ENCODE measurements at regions of chr1 and their contacts with region 1.

Region 1: DNA sequence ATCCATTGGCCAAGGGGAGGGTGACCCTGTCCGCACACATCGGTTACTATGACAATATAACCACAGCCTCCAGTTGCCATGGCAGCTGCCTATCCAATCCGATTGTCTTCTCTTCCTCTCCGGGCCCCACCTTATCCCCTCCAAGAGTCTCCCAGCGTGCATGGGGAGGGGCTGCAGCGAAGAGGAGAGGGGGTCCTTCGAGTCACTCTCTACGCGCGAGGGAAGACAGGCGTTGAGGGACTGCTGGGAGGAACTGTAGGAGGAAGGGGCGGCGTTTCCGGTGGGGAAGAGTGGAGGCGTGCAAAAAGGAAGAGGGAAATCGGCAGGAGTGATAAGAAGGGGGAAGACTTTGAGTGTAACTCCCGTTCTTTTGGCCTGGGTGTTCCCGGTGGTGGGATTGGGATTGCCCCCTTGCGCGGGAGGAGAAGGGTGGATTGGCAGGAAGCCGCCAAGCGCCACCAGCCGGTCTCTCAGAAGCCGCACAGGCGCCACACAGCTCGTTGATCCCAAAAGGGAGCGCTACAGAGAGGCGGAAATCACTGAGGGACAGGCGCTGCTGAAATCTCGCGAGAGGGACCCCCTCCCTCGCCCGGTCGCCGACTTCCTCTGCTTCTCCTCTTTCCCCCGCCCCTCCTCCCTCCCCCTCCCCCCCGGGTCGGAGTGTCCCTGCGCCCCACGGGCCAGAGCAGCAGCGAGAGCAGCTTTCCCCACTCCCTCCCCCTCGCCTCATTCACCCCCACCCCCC is 384 bp upstream of the SMG7 start:
- DNase-seq: peak; percentile 90
- H3K4me3 ChIP-seq: peak overlapping the region; percentile 92 to 100 (median 92)
- H3K27ac ChIP-seq: peak overlapping the region; percentile 93 to 99 (median 98)
- H3K4me1 ChIP-seq: peaks cover 0 to 59% (median 25%) of the 10 kb centered on the region in 3 donors
- H3K27me3 ChIP-seq: no peaks in the 10 kb centered on the region
- CTCF ChIP-seq: peak in 2 of 6 experiments; percentile 8 to 15
- POLR2A ChIP-seq: peak in 1 of 4 donors; percentile 5

Region 2: DNA sequence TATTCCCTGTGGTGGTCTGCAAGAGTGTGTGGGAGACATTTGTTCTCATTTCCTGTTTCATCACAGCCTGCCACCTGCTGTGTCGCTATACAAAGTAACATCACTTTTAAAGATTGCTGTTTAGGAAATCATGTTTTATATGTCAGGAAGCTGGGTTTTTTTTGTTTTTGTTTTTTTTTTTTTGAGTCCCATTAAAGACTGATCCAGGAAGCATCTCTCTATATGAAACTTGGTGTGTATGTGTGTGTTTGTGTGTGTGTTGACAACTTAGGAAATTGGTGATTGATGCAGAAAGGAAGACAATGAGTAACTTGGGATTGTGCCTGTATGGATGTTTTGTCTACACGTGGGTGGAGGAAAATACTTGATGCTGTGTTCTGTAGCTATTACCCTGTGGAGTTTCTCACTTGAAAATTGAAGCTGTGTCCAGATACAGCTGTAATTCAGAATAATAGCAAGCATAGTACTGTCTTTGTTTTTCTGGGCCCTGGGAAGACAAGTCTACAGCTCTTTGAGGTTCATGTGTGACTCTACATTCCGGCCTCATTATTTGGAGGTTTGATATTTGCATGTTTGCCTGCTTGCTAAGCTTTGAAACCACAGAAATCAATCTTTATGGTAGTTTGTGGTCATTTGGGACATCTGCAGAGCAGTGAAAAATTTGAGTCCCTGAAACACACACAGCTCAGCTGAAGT is 400.8 kb before region 1 on chr1:
- intact Hi-C with region 1: no loop called
- DNase-seq: no peak
- H3K4me3 ChIP-seq: no peak overlapping the region
- H3K27ac ChIP-seq: no peak overlapping the region
- H3K4me1 ChIP-seq: peaks cover 7 to 70% (median 30%) of the 10 kb centered on the region in 3 donors
- H3K27me3 ChIP-seq: no peaks in the 10 kb centered on the region
- CTCF ChIP-seq: no peak
- POLR2A ChIP-seq: no peak

Region 3: DNA sequence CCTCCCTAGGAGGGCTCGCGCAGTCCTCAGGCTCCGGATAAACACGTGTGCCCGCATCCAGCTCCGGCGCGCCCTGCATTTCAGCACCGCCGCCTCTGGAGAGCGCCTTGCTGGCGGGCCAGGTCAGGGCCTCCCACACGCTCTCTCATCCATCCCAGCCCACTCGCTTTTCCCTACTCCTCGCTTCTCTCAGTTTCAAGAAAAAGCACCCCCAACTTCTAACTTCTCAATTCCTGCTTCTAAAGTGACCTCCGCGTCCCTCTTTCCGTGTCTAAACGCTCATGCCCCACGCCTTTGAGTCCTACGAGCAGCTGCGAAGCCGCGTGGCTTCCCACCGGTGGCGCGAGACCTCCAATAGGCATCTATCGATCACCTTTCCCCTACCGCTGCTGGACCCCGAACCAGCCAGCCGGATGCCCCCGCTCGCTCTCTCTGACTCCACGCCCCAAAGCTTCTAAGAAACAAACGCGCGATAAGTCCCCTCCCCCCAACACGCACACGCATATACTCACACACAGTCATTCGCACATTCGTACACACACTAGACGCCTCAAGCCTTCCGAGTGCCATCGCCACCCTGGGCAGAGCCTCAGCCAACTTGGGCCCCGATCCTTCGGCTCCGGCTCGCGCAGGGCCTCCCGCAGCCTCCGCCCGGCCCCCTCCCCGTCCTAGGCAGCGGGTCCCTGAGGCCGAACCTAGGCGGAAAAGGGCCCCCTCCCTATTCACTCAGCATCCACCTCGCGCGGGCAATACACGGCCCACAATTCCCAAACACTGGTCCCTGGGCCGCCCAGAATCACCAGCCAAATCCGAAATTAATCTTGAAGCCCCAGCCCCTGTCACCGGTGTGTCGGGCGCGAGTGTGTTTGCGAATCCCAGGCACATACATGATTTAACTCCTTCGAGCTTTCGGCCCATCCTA is 54.8 kb before region 1 on chr1:
- intact Hi-C with region 1: no loop called
- DNase-seq: no peak
- H3K4me3 ChIP-seq: peak overlapping the region in 3 of 4 donors; percentile 8 to 55 (median 36)
- H3K27ac ChIP-seq: no peak overlapping the region
- H3K4me1 ChIP-seq: peaks cover 4 to 23% (median 14%) of the 10 kb centered on the region in 3 donors
- H3K27me3 ChIP-seq: peaks cover 9 to 80% (median 15%) of the 10 kb centered on the region in 4 donors
- CTCF ChIP-seq: no peak
- POLR2A ChIP-seq: no peak

Region 4: DNA sequence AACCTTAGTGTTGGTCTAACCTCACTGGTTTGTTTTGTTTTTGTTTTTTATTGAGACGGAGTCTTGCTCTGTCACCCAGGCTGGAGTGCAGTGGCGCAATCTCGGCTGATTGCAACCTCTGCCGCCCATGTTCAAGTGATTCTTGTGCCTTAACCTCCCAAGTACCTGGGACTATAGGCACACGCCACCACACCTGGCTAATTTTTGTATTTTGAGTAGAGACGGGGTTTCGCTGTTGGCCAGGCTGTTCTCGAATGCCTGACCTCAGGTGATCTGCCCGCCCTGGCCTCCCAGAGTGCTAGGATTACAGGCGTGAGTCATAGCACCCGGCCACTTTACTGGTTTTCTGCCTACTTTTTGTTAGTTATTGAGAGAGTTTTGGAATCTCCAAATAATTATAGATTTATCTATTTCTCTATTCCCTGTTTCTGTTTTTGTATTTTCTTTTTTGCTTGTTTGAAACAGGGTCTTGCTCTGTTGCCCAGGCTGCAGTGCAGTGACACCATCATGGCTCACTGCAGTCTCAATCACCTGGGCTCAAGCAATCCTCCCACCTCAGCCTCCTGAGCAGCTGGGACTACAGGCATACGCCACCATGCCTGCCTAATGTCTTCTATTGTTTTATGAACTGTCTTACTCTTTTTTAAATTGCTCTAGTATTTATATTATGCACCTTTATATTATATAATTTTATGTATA is 21.8 kb after region 1 on chr1:
- intact Hi-C with region 1: no loop called
- DNase-seq: no peak
- H3K4me3 ChIP-seq: no peak overlapping the region
- H3K27ac ChIP-seq: no peak overlapping the region
- H3K4me1 ChIP-seq: peaks cover 0 to 16% (median 0%) of the 10 kb centered on the region in 3 donors
- H3K27me3 ChIP-seq: no peaks in the 10 kb centered on the region
- CTCF ChIP-seq: no peak
- POLR2A ChIP-seq: no peak

Region 5: DNA sequence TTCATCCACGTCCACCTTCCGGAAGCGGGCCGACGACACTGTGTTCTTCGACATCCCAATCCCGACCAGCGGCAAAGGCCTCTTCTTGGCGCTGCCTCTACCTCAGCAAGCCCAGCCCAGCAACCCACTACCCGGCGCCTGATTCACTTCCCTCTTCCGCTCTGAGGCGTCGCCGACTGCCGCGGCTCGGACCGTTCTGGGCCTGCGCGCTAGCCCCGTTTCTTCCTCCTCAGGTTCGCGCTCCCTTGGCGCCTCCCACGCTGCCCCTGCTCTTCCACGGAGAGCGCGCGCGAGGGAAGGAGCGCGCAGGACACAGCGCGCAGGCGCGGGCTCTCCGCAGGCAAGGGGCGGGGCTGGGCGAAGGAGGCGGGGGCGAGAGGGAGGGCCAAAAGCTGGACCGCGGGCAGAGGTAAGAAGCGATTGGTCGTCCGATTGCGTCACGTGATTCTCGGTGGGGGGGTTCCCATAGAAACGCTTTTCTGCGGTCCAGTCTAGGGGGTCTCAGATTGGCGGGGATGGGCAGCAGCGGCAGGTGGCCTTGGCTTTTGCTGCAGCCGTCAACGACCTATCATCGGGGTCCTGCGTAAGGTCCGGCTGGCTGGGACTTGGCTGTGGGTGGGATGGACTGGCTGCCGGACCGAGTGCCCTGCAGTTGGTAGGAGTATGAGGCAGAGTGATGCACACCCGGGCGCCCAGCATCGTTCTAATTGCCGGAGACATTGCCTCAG is 163.9 kb after region 1 on chr1 and contains the start of gene ARPC5:
- intact Hi-C with region 1: loop called (anchors 10 kb)
- DNase-seq: peak; percentile 78
- H3K4me3 ChIP-seq: peak within 1 kb of the TSS; percentile 84 to 94 (median 86)
- H3K27ac ChIP-seq: peak within 1 kb of the TSS; percentile 95 to 97 (median 97)
- H3K4me1 ChIP-seq: peaks cover 17 to 46% (median 20%) of the 10 kb centered on the region in 3 donors
- H3K27me3 ChIP-seq: no peaks in the 10 kb centered on the region
- CTCF ChIP-seq: peak in 2 of 6 experiments; percentile 2 to 35
- POLR2A ChIP-seq: peak in 3 of 4 donors; percentile 26 to 94 (median 94)
- total RNA-seq, gene ARPC5: 90.2 to 136 (median 102) TPM